ENCODE measurements at regions of chr6 and their contacts with region 1.

Region 1: DNA sequence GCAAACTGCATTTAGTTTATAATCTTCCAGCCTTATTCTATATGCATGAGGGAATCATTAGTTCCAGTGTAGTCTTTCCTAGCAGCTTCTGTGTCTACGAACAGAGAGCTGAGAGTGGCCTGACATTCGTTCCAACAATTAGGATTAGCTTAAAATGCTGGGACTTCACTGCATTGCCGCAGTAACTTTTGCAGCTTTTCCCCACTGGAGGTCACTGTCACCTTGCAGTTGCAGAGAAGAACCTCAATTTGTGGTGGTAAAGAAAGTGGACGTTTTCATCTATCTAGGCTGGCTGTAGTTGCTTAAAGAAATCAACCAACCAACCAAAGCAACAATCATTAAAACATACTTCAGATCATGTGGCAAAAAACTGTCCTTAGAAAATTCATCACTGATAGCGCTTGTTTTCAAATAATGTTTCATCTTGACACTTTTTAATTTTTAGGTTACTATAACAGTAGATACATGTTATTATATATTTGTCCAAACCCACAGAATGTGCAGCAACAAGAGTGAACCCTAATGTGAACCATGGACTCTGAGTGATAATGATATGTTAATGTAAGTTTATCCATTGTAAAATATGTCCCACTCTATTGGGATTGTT is 12.2 kb downstream of the MYLK4 start:
- DNase-seq: peak; percentile 38 to 53
- H3K4me3 ChIP-seq: no peak overlapping the region
- H3K27ac ChIP-seq: no peak overlapping the region
- H3K4me1 ChIP-seq: no peaks in the 10 kb centered on the region
- H3K27me3 ChIP-seq: no peaks in the 10 kb centered on the region
- CTCF ChIP-seq: peak; percentile 72

Region 2: GRCh38 chr6:2900821-2901644 is 162.6 kb after region 1 on chr6:
- CTCF ChIA-PET with region 1: no interaction called
- POLR2A ChIA-PET with region 1: no interaction called
- intact Hi-C with region 1: no loop called
- DNase-seq: no peak
- H3K4me3 ChIP-seq: no peak overlapping the region
- H3K27ac ChIP-seq: no peak overlapping the region
- H3K4me1 ChIP-seq: no peaks in the 10 kb centered on the region
- H3K27me3 ChIP-seq: no peaks in the 10 kb centered on the region
- CTCF ChIP-seq: no peak

Region 3: DNA sequence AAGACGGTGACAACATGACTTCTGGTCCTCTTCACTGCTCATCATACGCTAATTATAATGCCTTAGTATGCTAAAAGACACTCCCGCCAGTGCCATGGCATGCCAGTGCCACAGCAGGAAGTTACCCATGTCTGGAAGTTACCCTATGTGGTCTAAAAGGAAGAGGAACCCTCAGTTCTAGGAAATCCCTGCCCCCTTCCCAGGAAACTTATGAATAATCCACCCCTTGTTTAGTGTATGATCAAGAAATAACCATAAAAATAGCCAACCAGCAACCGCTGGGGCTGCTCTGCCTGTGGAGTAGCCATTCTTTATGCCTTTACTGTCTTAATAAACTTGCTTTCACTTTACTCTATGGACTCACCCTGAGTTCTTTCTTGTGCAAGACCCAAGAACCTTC is 180.5 kb after region 1 on chr6:
- CTCF ChIA-PET with region 1: no interaction called
- POLR2A ChIA-PET with region 1: no interaction called
- intact Hi-C with region 1: loop called (anchors 10 kb)
- DNase-seq: no peak
- H3K4me3 ChIP-seq: no peak overlapping the region
- H3K27ac ChIP-seq: no peak overlapping the region
- H3K4me1 ChIP-seq: no peaks in the 10 kb centered on the region
- H3K27me3 ChIP-seq: no peaks in the 10 kb centered on the region
- CTCF ChIP-seq: no peak

Region 4: DNA sequence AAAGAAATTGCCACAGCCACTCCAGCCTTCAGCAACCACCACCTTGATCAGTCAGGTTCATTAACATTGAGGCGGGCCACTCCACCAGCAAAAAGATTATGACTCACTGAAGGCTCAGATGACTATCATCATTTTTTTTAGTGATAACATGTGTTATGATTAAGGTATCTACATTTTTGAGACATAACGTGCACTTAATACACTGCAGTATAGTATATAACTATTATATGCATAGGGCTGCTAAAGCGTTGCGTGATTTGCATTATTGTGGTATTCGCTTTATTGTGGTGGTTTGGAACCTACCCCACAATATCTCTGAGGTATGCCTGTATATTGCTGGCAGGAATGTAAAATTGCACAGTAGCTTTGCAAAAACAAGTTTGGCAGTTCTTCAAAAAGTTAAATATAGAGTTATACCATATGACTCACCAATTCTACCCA is 323.0 kb after region 1 on chr6:
- CTCF ChIA-PET with region 1: interaction called, 3 read pairs
- POLR2A ChIA-PET with region 1: no interaction called
- intact Hi-C with region 1: loop called (anchors 2 kb)
- DNase-seq: peak; percentile 68 to 92
- H3K4me3 ChIP-seq: no peak overlapping the region; the same call in 1 of the 2 replicates
- H3K27ac ChIP-seq: peak overlapping the region; percentile 42; the same call in 1 of the 2 replicates
- H3K4me1 ChIP-seq: peaks cover 13% of the 10 kb centered on the region
- H3K27me3 ChIP-seq: no peaks in the 10 kb centered on the region
- CTCF ChIP-seq: no peak